ENCODE measurements at regions of chr1 and their contacts with region 1.

Region 1: DNA sequence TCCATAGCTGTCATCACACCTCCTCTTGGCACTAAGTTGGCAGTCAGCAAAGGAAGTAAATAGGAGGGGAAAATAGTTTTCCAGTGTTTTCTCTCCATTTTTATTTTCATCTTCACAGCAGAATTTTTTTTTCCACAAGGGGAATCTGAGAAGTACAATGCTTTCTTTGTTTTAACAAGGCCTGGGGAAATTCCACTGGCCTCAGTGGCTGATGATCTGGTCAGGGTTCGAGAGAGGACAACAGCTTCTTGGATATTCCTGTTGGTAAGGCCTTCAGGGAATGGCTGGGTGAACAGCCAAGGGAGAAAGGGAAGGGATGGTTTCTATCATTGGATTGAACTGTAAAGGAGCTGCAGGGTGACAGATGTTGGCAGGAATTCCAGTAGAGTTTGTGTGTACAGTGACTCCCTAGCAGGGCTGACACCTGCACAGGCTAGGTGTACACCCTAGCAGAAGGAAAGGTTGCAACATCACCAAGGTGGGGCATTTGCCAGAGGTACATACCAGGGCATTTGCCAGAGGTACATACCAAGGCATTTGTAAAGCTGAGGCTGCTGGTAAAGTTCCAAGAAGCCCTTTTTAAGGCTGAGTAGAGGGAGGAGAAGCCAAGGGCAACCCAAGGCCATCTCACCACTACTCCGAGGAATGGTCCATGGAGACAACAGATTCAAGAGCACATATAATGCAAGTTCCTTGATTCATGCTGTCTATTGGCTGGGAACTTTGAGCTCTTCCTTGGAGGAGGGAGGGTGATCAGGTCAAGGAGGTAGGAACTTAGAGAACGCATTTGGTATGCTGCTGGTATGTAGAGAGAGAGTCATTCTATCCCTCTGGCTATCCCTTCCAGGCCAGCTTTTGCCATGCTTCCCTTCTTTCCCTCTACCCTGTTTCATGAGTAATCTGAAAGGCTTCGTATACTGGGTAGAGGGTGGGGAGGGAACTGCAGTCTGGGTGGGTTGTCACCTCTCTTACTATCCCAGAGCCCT is 3.1 kb downstream of the GJA5 start:
- DNase-seq: peak; percentile 95
- H3K4me3 ChIP-seq: no peak overlapping the region
- H3K27ac ChIP-seq: peak overlapping the region; percentile 86
- H3K4me1 ChIP-seq: peaks cover 72% of the 10 kb centered on the region
- H3K27me3 ChIP-seq: no peaks in the 10 kb centered on the region
- CTCF ChIP-seq: no peak

Region 2: DNA sequence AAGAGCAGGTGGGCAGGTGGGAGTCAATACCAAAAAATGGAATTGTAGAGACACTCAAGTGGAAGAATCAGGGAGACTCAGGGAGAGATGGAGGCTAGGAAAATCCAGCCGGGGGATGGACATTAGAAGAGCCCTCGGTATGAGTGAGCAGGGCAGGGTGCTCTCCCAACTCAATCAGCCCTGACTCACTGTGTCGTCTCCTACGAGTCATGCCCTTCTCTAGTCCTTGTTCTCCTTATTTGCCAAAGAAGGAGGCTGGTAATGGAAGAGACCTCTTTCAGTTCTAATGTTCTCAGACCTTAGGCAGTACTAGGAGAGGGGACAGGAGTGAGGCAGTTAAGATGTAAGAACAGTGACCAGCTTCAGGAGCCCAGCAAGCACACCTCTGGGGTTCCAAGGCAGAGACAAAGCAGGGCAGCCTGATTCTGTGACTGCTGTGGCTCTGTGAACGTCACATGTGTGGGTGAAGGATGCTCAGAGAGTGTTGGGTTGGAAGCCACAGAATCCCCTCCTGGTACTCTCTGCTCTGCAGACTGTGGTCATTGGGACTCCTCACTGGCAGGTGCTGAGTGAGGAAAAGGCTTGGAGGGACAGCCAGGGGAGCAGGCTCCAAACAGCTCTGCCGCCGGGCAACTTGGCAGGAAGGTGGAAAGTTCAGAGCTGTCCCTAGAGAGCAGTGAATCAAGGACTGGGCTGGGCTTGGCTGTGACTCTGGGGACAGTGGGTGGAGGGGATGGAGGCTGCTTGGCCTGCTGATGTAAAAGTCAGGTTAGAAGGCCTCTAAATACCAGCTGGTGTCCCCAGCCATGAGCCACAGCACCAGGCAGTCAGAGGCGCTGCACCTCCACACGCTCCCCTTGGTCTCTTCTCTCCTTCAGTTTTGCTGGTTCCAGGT is 14.2 kb after region 1 on chr1:
- CTCF ChIA-PET with region 1: no interaction called
- dilution Hi-C with region 1: no loop called
- in situ Hi-C with region 1: no loop called
- intact Hi-C with region 1: loop called (anchors 1 kb)
- DNase-seq: peak; percentile 72
- H3K4me3 ChIP-seq: no peak overlapping the region
- H3K27ac ChIP-seq: no peak overlapping the region
- H3K4me1 ChIP-seq: peaks cover 4% of the 10 kb centered on the region
- H3K27me3 ChIP-seq: no peaks in the 10 kb centered on the region
- CTCF ChIP-seq: no peak

Region 3: GRCh38 chr1:147794570-147794969 is 37.3 kb after region 1 on chr1:
- CTCF ChIA-PET with region 1: no interaction called
- dilution Hi-C with region 1: no loop called
- in situ Hi-C with region 1: no loop called
- intact Hi-C with region 1: loop called (anchors 5 kb)
- DNase-seq: no peak
- H3K4me3 ChIP-seq: no peak overlapping the region
- H3K27ac ChIP-seq: no peak overlapping the region
- H3K4me1 ChIP-seq: no peaks in the 10 kb centered on the region
- H3K27me3 ChIP-seq: no peaks in the 10 kb centered on the region
- CTCF ChIP-seq: no peak

Measured in mammary epithelial cell (primary cell).